Gastrocnemius medialis (tissue), 4 donors: ENCODE measurements at regions of chr12 and their contacts with region 1.

Region 1: GRCh38 chr12:113221181-113221997 is at the start of gene TPCN1:
- DNase-seq: peak; percentile 100
- ATAC-seq: peak; percentile 86 to 93
- H3K4me3 ChIP-seq: peak within 1 kb of the TSS; percentile 72 to 89 (median 80)
- H3K27ac ChIP-seq: peak within 1 kb of the TSS; percentile 92 to 99 (median 96)
- H3K4me1 ChIP-seq: peaks cover 37 to 41% of the 10 kb centered on the region in 2 donors
- H3K27me3 ChIP-seq: no peaks in the 10 kb centered on the region
- CTCF ChIP-seq: peak in 4 of 5 experiments; percentile 7 to 13 (median 12)
- POLR2A ChIP-seq: peak; percentile 99 to 100
- total RNA-seq, gene TPCN1: 21.4 to 27.0 (median 25.4) TPM

Region 2: GRCh38 chr12:112418608-112419298 is 802.6 kb before region 1 on chr12 and contains the start of gene PTPN11:
- in situ Hi-C with region 1: no loop called
- intact Hi-C with region 1: loop called (anchors 5 kb)
- DNase-seq: peak; percentile 72 to 82
- ATAC-seq: peak; percentile 67 to 69
- H3K4me3 ChIP-seq: peak within 1 kb of the TSS; percentile 70 to 94 (median 76)
- H3K27ac ChIP-seq: peak within 1 kb of the TSS; percentile 93 to 99 (median 97)
- H3K4me1 ChIP-seq: peaks cover 51 to 52% of the 10 kb centered on the region in 2 donors
- H3K27me3 ChIP-seq: no peaks in the 10 kb centered on the region
- CTCF ChIP-seq: peak; percentile 24 to 72 (median 57)
- POLR2A ChIP-seq: peak; percentile 91 to 94
- total RNA-seq, gene PTPN11: 112 to 235 (median 163) TPM